Endothelial cell of umbilical vein (primary cell): ENCODE measurements at regions of chr2 and their contacts with region 1.

Region 1: DNA sequence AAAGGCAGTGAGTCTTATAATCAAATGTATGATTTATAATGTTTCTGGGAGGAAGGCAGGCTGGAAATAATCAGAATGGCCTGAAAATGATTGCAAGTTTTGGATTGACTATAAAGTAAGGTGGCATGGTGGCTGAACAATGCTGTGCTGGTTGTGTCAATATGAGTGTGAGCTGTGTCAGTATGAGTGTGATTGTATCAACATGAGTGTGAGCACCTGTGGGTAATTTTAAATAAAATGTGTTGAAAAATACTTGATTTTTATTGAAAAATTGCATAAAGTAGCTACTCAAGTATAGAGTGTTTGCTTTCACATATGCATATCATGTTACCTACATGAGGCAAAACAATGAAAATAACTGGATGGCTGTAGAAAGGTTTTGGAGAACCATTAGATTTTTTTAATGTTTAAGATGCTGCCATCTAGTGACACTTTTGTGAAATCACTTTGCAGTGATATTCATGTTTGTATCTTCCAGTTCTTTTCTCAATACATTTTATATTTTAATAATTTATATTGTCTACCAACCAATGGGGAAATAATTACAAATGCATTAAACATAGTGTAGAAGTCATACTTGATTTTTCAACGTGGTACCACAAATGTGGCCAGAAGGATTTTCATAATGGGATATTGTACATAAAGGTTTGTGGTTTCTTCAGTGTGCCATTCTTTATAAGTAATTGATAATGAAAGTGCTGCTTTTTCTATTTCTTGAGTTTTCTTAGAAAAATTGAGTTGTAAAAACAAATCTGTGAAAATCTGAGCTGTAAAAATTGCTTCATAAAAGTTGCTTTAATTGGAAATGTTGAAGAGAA is 103.3 kb downstream of the KYNU start:
- DNase-seq: peak; percentile 53
- H3K4me3 ChIP-seq: no peak overlapping the region
- H3K27ac ChIP-seq: no peak overlapping the region
- H3K4me1 ChIP-seq: peaks cover 2% of the 10 kb centered on the region
- H3K27me3 ChIP-seq: no peaks in the 10 kb centered on the region
- CTCF ChIP-seq: peak; percentile 18 to 25
- POLR2A ChIP-seq: no peak

Region 2: DNA sequence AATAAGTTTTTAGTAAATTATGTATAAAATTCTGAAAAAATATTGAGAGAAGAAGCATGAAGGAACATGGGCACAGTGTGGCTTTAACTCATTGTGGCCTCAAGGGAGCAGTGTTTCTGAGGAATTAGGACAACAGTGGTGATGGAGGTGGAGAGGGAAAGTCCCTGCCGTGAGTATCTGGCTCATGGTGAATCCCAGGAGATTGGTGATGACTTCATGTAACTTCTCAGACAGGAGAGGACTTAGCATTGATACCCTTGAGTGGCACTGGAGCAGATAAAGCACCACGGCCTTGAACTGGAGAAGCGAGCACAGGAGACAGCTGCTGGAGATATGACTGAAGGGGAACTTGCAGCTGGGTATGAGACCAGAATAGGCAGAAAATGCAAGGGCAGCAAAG is 815.0 kb before region 1 on chr2:
- CTCF ChIA-PET with region 1: interaction called, 7 read pairs
- POLR2A ChIA-PET with region 1: no interaction called
- dilution Hi-C with region 1: no loop called
- intact Hi-C with region 1: loop called (anchors 2 kb)
- DNase-seq: peak; percentile 74
- H3K4me3 ChIP-seq: no peak overlapping the region
- H3K27ac ChIP-seq: no peak overlapping the region
- H3K4me1 ChIP-seq: no peaks in the 10 kb centered on the region
- H3K27me3 ChIP-seq: peaks cover 0 to 5% of the 10 kb centered on the region in 2 experiments
- CTCF ChIP-seq: peak; percentile 30 to 53
- POLR2A ChIP-seq: no peak

Region 3: GRCh38 chr2:142642654-142643053 is 338.1 kb before region 1 on chr2:
- CTCF ChIA-PET with region 1: interaction called, 3 read pairs
- POLR2A ChIA-PET with region 1: no interaction called
- dilution Hi-C with region 1: no loop called
- intact Hi-C with region 1: loop called (anchors 5 kb)
- DNase-seq: no peak
- H3K4me3 ChIP-seq: no peak overlapping the region
- H3K27ac ChIP-seq: no peak overlapping the region
- H3K4me1 ChIP-seq: no peaks in the 10 kb centered on the region
- H3K27me3 ChIP-seq: no peaks in the 10 kb centered on the region
- CTCF ChIP-seq: no peak
- POLR2A ChIP-seq: no peak

Region 4: GRCh38 chr2:142796161-142796560 is 184.6 kb before region 1 on chr2:
- CTCF ChIA-PET with region 1: interaction called, 11 read pairs
- POLR2A ChIA-PET with region 1: no interaction called
- dilution Hi-C with region 1: no loop called
- intact Hi-C with region 1: loop called (anchors 2 kb)
- DNase-seq: peak; percentile 34
- H3K4me3 ChIP-seq: no peak overlapping the region
- H3K27ac ChIP-seq: no peak overlapping the region
- H3K4me1 ChIP-seq: no peaks in the 10 kb centered on the region
- H3K27me3 ChIP-seq: no peaks in the 10 kb centered on the region
- CTCF ChIP-seq: no peak
- POLR2A ChIP-seq: no peak

Region 5: DNA sequence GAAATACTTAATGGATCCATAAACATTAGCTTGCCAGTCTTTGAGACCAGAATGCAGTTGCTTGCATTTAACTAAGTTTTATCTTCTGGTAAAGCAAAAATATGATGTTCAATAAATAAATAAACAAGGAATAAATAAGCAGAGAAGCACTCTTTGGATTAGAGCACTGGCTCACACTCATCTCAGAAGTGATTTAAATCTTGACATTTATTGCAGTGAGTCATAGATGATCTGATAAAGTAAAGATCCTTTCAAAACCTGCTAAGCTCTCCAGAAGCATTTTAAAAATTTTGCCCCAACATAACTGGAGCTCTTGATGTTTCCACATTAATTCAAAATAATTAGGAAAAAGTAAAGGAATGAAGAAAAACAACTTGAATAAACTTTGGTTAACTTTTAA is 36.5 kb before region 1 on chr2:
- CTCF ChIA-PET with region 1: interaction called, 3 read pairs
- POLR2A ChIA-PET with region 1: no interaction called
- dilution Hi-C with region 1: no loop called
- intact Hi-C with region 1: loop called (anchors 2 kb)
- DNase-seq: peak; percentile 34
- H3K4me3 ChIP-seq: no peak overlapping the region
- H3K27ac ChIP-seq: no peak overlapping the region
- H3K4me1 ChIP-seq: peaks cover 24% of the 10 kb centered on the region
- H3K27me3 ChIP-seq: no peaks in the 10 kb centered on the region
- CTCF ChIP-seq: no peak
- POLR2A ChIP-seq: no peak